Caco-2 (cell line): ENCODE measurements at regions of chr17 and their contacts with region 1.

Region 1: GRCh38 chr17:5304636-5305035 is 22.6 kb downstream of the RABEP1 start:
- DNase-seq: no peak
- H3K4me3 ChIP-seq: no peak overlapping the region
- H3K4me3 Mint-ChIP-seq: no peak overlapping the region
- H3K27ac Mint-ChIP-seq: no peak overlapping the region
- H3K4me1 ChIP-seq: no peaks in the 10 kb centered on the region
- H3K4me1 Mint-ChIP-seq: no peaks in the 10 kb centered on the region
- H3K27me3 ChIP-seq: no peaks in the 10 kb centered on the region
- H3K27me3 Mint-ChIP-seq: no peaks in the 10 kb centered on the region
- CTCF ChIP-seq: no peak

Region 2: DNA sequence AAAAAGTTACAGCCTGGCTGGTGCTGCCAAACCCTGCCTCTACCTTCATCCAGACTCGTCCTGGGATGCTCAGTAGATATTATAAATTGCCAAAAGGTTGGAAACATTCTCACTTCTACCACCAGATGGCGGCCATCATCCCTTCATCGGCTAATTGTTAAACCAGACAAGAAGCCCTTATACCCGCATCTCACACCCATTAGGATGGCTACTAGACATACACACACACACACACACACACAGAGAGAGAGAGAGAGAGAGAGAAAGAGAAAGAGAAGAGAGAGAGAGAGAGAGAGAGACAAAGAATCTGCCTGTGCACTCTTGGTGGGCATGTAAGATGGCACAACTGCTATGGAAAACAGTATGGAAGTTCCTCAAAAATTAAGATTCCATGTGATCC is 55.0 kb before region 1 on chr17:
- CTCF ChIA-PET with region 1: no interaction called
- POLR2A ChIA-PET with region 1: no interaction called
- intact Hi-C with region 1: loop called (anchors 1 kb)
- DNase-seq: peak; percentile 38 to 50
- H3K4me3 ChIP-seq: no peak overlapping the region
- H3K4me3 Mint-ChIP-seq: no peak overlapping the region
- H3K27ac Mint-ChIP-seq: no peak overlapping the region
- H3K4me1 ChIP-seq: no peaks in the 10 kb centered on the region
- H3K4me1 Mint-ChIP-seq: no peaks in the 10 kb centered on the region
- H3K27me3 ChIP-seq: no peaks in the 10 kb centered on the region
- H3K27me3 Mint-ChIP-seq: no peaks in the 10 kb centered on the region
- CTCF ChIP-seq: peak; percentile 34 to 43

Region 3: DNA sequence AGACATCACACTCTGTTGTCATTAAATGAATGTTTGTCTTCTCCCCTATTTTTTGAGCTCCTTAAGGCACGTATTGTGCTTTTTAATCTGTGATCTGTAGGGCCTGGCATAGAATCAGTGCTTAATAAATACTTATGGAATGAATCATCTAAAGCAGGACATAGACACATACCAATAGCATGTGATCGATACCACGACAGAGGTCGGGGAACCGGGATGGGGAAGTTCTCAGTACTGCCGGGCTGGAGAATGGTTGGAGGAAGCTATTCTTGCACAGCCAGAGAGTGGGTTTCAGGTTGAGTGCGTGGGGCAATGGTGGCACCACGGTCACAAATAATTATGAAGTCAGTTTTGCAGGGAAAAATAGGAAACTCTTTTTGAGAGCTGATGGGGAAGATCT is 252.8 kb after region 1 on chr17:
- CTCF ChIA-PET with region 1: no interaction called
- POLR2A ChIA-PET with region 1: no interaction called
- intact Hi-C with region 1: no loop called
- DNase-seq: no peak
- H3K4me3 ChIP-seq: no peak overlapping the region
- H3K4me3 Mint-ChIP-seq: no peak overlapping the region
- H3K27ac Mint-ChIP-seq: no peak overlapping the region
- H3K4me1 ChIP-seq: no peaks in the 10 kb centered on the region
- H3K4me1 Mint-ChIP-seq: peaks cover 6% of the 10 kb centered on the region
- H3K27me3 ChIP-seq: no peaks in the 10 kb centered on the region
- H3K27me3 Mint-ChIP-seq: peaks cover 9% of the 10 kb centered on the region
- CTCF ChIP-seq: no peak